ENCODE measurements at regions of chr3 and their contacts with region 1.

Region 1: DNA sequence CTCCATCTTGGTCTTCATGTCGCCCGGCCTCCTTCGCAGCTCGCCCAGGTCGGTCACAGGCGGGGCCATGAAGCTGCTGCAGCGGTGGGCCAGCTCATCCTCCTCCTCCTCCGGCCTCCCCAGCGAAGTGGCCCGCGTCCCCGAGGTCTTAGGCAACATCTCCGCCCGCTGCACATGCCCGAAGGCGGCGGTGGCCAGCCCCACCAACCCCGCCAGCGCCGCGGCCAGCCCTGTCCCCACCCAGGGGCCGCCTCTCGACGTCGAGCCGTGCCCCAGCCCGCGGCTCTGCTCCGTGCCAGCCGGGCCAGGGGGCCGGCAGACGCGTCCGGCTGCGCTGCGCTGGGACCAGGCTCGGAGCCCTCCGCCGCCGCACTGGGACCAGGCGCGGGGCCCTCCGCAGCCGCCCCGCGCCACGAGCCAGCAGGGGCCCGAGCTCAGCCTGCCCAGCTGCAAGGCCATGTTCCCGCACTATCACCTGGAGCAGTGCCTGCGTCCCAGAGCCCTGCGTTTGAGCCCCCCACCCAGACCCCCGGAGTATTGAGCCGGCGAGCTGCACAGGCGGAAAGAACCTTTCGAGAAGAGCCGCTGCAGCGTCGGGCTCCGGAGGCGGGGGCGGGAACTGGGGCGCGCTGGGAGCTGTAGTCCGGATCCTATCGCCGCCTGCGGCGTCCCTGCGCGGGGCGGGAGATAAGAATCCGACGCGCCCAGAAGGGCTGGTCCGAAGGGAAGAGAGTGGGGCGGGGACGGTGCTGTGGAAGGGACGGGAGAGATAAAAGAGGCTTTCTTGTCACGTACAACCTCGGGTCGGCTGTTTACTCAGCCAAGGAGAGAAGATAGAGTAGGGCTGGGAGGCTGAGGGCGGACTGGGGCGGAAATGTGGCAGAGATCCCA is at the start of gene CPOX:
- DNase-seq: peak; percentile 81 to 88
- ATAC-seq: peak; percentile 97 to 99
- H3K4me3 ChIP-seq: peak within 1 kb of the TSS; percentile 85
- H3K27ac ChIP-seq: peak within 1 kb of the TSS; percentile 77 to 86
- H3K4me1 ChIP-seq: peaks cover 11% of the 10 kb centered on the region; the same call in 1 of the 3 replicates
- CTCF ChIP-seq: no peak
- EP300 ChIP-seq: no peak
- POLR2A ChIP-seq: peak; percentile 50; the same call in 1 of the 2 replicates
- RAD21 ChIP-seq: no peak
- polyA plus RNA-seq, gene CPOX: 28.0 and 30.3 TPM in 2 replicates

Region 2: DNA sequence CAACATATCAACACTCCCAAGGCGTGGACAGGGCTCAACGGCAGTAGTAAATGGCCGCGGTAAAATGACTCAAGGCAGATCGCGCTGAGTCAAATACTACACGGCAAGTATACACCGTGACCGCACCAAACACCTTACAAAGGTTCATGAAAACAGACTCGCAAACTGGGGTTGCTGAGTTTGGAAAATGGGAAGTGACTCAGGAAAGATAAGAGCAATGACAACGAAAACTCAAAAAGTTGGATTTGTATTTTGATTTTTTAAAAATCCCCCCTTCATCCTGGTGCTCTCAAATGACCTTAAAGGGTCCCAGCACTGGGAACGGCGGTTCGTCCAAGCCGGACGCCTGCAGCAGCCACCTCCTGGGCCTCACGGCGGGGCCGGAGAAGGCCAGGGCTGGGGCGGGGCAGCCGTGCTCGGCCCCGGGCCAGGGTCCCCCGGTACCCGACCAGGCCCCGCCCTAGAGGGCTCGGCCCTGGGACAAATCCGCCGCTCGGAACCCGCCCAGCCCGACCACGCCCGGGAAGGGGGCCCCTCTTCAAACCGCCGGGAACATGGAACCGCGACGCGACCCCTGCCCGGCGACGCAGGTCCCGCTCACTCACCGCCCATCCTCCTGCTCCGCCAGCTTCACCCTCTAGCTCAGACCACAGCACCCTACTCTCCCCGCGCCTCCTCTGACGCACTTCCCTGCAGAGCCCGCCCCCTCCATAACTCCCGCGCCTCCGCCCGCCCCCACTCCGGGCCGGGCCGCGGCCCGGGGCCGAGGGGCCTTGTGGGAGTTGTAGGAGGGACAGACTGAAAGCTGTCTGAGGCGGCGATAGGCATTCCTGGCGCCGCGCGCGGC is 70.8 kb before region 1 on chr3 and contains the start of gene CLDND1:
- CTCF ChIA-PET with region 1: interaction called, 3 read pairs
- POLR2A ChIA-PET with region 1: interaction called, 10 read pairs
- DNase-seq: peak; percentile 92 to 95
- ATAC-seq: peak; percentile 99
- H3K4me3 ChIP-seq: peak within 1 kb of the TSS; percentile 92
- H3K27ac ChIP-seq: peak within 1 kb of the TSS; percentile 95 to 97
- H3K4me1 ChIP-seq: peaks cover 8% of the 10 kb centered on the region; the same call in 2 of the 3 replicates
- CTCF ChIP-seq: no peak
- EP300 ChIP-seq: no peak
- POLR2A ChIP-seq: peak; percentile 83
- RAD21 ChIP-seq: no peak
- polyA plus RNA-seq, gene CLDND1: 150 TPM in 2 replicates

Measured in A549 (cell line).